Activated naive CD4-positive, alpha-beta T cell treated with anti-CD3 and anti-CD28 coated beads for 36 hours (primary cell): ENCODE measurements at regions of chr18 and their contacts with region 1.

Region 1: GRCh38 chr18:54852780-54853675 is 24.8 kb downstream of the RAB27B start:
- DNase-seq: no peak
- H3K4me3 Mint-ChIP-seq: no peak overlapping the region
- H3K27ac Mint-ChIP-seq: no peak overlapping the region
- H3K4me1 Mint-ChIP-seq: peaks cover 10% of the 10 kb centered on the region
- H3K27me3 Mint-ChIP-seq: no peaks in the 10 kb centered on the region

Region 2: DNA sequence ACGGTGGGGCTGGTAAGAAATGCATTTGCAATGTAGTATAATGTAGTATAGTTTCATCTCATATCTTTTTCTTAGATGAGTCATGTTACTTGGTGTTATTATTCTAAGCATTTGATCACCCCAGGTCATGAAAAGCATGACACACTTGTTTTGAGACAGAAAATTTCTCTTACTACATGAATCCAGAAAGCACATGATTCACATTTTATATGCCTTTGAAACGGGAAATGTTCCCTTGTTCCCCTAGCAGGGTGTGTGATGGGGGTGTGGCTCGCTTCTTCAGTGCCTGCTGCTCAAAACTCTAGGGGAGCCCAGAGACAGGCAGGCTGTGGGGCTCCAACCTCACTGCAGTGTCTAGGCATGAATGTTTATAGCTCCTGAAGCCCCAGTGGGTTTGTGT is 140.7 kb before region 1 on chr18:
- CTCF ChIA-PET with region 1: no interaction called
- intact Hi-C with region 1: loop called (anchors 2 kb)
- DNase-seq: peak; percentile 38
- H3K4me3 Mint-ChIP-seq: no peak overlapping the region
- H3K27ac Mint-ChIP-seq: no peak overlapping the region
- H3K4me1 Mint-ChIP-seq: peaks cover 26% of the 10 kb centered on the region
- H3K27me3 Mint-ChIP-seq: peaks cover 7% of the 10 kb centered on the region

Region 3: DNA sequence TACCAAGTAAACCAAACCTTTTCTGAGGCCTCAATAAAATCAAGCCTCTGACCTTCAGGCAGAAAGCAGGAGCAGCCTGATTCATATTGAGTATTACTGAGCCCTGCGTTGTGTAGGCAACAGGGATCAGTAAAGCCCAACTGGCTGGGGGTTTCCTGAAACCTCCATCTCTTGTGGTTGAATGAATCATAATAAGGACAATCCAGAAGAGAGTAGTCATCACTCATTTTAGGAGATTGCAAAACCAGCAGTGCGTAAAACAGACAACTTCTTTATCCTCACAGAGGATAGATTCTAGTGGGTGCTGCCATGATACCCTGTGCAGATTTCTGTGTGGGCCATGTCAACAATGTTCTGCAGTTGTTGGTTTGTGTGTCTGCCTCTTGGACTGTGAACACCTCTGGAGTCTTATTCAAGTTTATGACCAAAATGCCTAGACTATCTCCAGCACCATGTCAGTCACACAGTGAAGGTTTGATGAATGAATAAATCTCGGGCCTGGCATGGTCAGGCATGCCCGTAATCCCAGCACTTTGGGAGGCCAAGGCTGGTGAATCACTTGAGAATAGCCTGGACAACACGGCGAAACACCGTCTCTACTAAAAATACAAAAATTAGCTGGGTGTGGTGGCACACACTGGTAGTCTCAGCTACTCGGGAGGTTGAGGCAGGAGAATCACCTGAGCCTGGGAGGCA is 76.6 kb before region 1 on chr18:
- CTCF ChIA-PET with region 1: no interaction called
- intact Hi-C with region 1: loop called (anchors 1 kb)
- DNase-seq: peak; percentile 56
- H3K4me3 Mint-ChIP-seq: no peak overlapping the region
- H3K27ac Mint-ChIP-seq: no peak overlapping the region
- H3K4me1 Mint-ChIP-seq: peaks cover 3% of the 10 kb centered on the region
- H3K27me3 Mint-ChIP-seq: peaks cover 2% of the 10 kb centered on the region

Region 4: GRCh38 chr18:54822872-54823845 is 29.9 kb before region 1 on chr18:
- CTCF ChIA-PET with region 1: no interaction called
- intact Hi-C with region 1: no loop called
- DNase-seq: no peak
- H3K4me3 Mint-ChIP-seq: no peak overlapping the region
- H3K27ac Mint-ChIP-seq: no peak overlapping the region
- H3K4me1 Mint-ChIP-seq: peaks cover 6% of the 10 kb centered on the region
- H3K27me3 Mint-ChIP-seq: peaks cover 3% of the 10 kb centered on the region

Region 5: GRCh38 chr18:54835944-54836343 is 17.1 kb before region 1 on chr18:
- CTCF ChIA-PET with region 1: interaction called, 3 read pairs
- intact Hi-C with region 1: loop called (anchors 2 kb)
- DNase-seq: no peak
- H3K4me3 Mint-ChIP-seq: no peak overlapping the region
- H3K27ac Mint-ChIP-seq: no peak overlapping the region
- H3K4me1 Mint-ChIP-seq: peaks cover 15% of the 10 kb centered on the region
- H3K27me3 Mint-ChIP-seq: no peaks in the 10 kb centered on the region